ENCODE measurements at regions of chr2 and their contacts with region 1.

Region 1: DNA sequence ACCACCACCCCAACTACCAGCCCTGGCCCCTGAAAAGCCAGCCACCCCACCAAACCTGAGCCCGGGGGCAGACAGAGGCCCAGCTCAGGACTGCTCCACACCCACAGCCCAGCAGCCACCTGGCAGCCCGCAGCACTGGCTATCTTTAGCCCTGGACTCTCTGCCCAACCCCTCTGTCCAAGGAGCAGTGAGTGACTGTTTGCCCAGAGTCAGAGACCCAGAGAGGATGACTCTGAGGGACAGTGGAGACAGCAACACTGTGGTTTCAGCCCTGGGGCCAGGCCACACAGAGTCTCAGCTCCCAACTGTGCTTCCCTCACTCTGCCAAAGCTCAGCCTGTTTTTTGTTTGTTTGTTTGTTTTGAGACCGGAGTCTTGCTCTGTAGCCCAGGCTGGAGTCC is 32.6 kb downstream of the BIN1 start:
- DNase-seq: no peak
- ATAC-seq: peak; percentile 48
- H3K4me3 ChIP-seq: no peak overlapping the region
- H3K27ac ChIP-seq: no peak overlapping the region
- H3K4me1 ChIP-seq: peaks cover 4% of the 10 kb centered on the region; the same call in 1 of the 2 replicates
- H3K27me3 ChIP-seq: no peaks in the 10 kb centered on the region
- CTCF ChIP-seq: no peak
- EP300 ChIP-seq: no peak
- POLR2A ChIP-seq: no peak
- RAD21 ChIP-seq: no peak

Region 2: GRCh38 chr2:127058246-127058953 is 16.0 kb before region 1 on chr2:
- CTCF ChIA-PET with region 1: no interaction called
- POLR2A ChIA-PET with region 1: no interaction called
- RAD21 ChIA-PET with region 1: no interaction called
- SMC1A ChIA-PET with region 1: no interaction called
- in situ Hi-C with region 1: no loop called
- intact Hi-C with region 1: no loop called
- DNase-seq: no peak
- ATAC-seq: peak; percentile 24; the same call in 1 of the 3 replicates
- H3K4me3 ChIP-seq: no peak overlapping the region
- H3K27ac ChIP-seq: no peak overlapping the region
- H3K4me1 ChIP-seq: no peaks in the 10 kb centered on the region
- H3K27me3 ChIP-seq: no peaks in the 10 kb centered on the region
- CTCF ChIP-seq: no peak
- EP300 ChIP-seq: no peak
- POLR2A ChIP-seq: no peak
- RAD21 ChIP-seq: no peak

Region 3: DNA sequence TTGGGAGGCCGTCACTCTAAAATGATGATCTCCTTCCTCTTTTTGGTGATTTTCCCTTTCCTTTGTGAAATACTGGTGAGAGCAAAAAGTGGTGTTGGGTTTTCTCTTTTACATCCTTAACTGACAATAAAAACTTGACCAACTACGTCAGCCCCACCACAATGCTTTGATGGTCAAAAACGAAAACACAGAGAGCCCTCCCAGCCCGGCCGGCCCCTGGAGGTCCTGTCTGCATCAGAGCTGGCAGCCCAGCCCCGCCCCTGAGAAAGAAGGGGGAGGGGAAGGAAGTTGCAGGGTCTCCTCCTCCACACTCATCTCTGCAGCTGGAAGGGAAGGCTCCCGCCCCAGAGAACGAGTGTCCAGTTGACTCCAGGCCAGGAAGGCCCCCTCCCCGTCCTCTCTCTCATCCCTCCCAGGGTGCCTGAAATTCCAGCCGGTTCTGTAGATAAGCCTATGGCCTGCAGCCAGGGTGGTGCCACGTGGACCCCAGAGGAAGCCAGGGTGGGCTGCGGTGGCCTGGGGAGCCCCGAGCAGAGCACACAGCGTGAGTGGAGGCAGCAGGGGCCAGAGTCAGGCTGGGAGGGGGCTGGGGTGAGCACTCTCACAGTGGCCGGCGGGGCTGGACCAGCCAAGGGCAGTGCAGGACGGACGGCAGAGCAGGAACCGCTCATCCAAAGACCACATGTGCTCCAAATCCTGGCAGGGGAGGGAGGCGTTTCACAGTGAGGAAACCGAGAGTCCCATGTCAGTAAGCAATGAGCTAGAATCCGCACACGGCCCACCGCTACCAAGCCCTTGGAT is 12.8 kb after region 1 on chr2:
- CTCF ChIA-PET with region 1: interaction called, 20 read pairs
- POLR2A ChIA-PET with region 1: no interaction called
- RAD21 ChIA-PET with region 1: interaction called, 5 read pairs
- SMC1A ChIA-PET with region 1: interaction called, 18 read pairs
- in situ Hi-C with region 1: no loop called
- intact Hi-C with region 1: no loop called
- DNase-seq: peak; percentile 81
- ATAC-seq: peak; percentile 81
- H3K4me3 ChIP-seq: peak overlapping the region; percentile 23; the same call in 1 of the 2 replicates
- H3K27ac ChIP-seq: peak overlapping the region; percentile 42; the same call in 1 of the 2 replicates
- H3K4me1 ChIP-seq: peaks cover 38% of the 10 kb centered on the region
- H3K27me3 ChIP-seq: no peaks in the 10 kb centered on the region
- CTCF ChIP-seq: no peak
- EP300 ChIP-seq: peak; percentile 76 to 86; a peak in 2 of 4 replicates
- POLR2A ChIP-seq: no peak
- RAD21 ChIP-seq: no peak

Region 4: GRCh38 chr2:127239395-127239794 is 165.0 kb after region 1 on chr2:
- CTCF ChIA-PET with region 1: no interaction called
- POLR2A ChIA-PET with region 1: no interaction called
- RAD21 ChIA-PET with region 1: no interaction called
- SMC1A ChIA-PET with region 1: no interaction called
- in situ Hi-C with region 1: no loop called
- intact Hi-C with region 1: no loop called
- DNase-seq: no peak
- ATAC-seq: no peak
- H3K4me3 ChIP-seq: no peak overlapping the region
- H3K27ac ChIP-seq: no peak overlapping the region
- H3K4me1 ChIP-seq: no peaks in the 10 kb centered on the region
- H3K27me3 ChIP-seq: no peaks in the 10 kb centered on the region
- CTCF ChIP-seq: no peak
- EP300 ChIP-seq: no peak
- POLR2A ChIP-seq: no peak
- RAD21 ChIP-seq: no peak